ENCODE measurements at regions of chr1 and their contacts with region 1.

Region 1: DNA sequence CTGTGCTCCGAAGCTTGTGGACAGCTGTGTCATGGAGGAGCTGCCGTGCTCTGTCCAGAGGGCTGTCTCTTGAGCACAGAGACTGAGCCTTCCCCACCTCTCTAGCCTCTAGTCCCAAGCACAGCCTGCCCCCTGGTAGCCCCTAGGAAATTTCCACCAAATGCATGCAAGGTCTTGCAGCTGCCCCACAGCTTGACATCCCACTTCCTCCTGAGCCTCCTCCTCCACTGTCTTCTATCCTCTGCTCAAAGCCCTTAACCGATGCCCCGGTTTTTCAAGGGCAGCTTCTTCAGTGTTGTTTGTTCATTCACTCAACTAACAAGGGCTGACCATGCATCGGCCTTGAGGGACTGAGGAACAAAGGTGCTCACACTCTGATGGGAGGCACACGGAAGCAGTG is 20.6 kb upstream of the PROK1 start:
- DNase-seq: no peak
- H3K4me3 Mint-ChIP-seq: no peak overlapping the region
- H3K27ac Mint-ChIP-seq: no peak overlapping the region
- H3K4me1 Mint-ChIP-seq: no peaks in the 10 kb centered on the region
- H3K27me3 Mint-ChIP-seq: peaks cover 68% of the 10 kb centered on the region

Region 2: DNA sequence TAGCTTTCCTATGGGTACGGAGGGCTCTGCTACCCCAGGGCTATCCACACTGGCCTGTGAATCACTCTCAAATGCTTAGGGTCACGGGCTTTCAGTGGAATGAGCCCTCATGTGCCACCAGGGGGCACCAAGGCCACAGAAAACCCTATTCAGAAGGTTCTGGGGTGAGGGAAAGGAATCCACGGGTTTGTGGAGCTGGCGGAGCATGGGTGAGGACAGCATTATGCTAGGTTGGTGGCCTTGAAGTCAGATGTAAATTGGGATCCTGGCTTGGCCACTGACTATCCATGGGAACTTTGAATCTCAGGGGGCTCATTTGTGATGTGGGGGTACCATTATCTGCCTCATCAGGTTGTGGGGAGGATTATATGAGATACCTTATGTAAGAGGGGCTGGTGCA is 17.8 kb before region 1 on chr1:
- CTCF ChIA-PET with region 1: interaction called, 10 read pairs
- DNase-seq: peak; percentile 75
- H3K4me3 Mint-ChIP-seq: no peak overlapping the region
- H3K27ac Mint-ChIP-seq: no peak overlapping the region
- H3K4me1 Mint-ChIP-seq: peaks cover 17% of the 10 kb centered on the region
- H3K27me3 Mint-ChIP-seq: no peaks in the 10 kb centered on the region

Region 3: GRCh38 chr1:110440877-110441276 is 10.5 kb after region 1 on chr1:
- CTCF ChIA-PET with region 1: no interaction called
- DNase-seq: no peak
- H3K4me3 Mint-ChIP-seq: no peak overlapping the region
- H3K27ac Mint-ChIP-seq: no peak overlapping the region
- H3K4me1 Mint-ChIP-seq: no peaks in the 10 kb centered on the region
- H3K27me3 Mint-ChIP-seq: peaks cover 54% of the 10 kb centered on the region